AG04449 (cell line): ENCODE measurements at regions of chr22 and their contacts with region 1.

Region 1: GRCh38 chr22:22687638-22688500 is 43.5 kb downstream of the GGTLC2 start:
- DNase-seq: peak; percentile 17
- H3K4me3 ChIP-seq: no peak overlapping the region
- CTCF ChIP-seq: peak; percentile 75

Region 2: GRCh38 chr22:22463855-22464540 is 223.9 kb before region 1 on chr22:
- CTCF ChIA-PET with region 1: interaction called, 12 read pairs
- POLR2A ChIA-PET with region 1: no interaction called
- DNase-seq: no peak
- H3K4me3 ChIP-seq: no peak overlapping the region
- CTCF ChIP-seq: peak; percentile 49

Region 3: DNA sequence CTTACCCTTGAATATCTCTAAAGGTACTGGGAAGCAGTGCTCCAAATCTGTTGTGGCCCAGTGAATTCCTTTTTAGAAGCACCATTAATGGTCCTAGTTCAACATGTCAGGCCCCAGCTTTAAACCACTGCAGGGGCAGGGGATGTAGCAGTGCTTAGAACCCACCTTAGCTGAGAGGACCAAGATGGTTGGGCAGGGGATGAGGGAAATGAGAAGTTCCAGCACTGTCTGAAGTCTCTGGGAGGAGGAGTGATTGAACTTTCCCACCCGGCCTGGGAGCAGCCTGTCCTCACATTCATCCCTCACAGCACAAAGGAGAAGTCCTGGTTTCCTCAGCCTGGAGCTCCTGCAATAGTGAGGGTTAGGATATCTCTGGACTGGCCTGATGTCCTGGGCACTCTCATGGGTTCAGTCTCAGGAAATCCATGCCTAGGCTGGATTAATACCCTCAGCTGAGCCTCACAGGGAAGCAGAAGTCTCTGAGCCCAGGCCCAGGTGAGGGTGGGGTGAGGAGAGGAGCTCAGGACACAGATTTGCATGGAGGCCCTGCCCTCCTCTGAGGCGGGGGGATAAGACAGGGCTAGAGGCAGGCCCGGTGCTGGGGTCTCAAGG is 100.2 kb before region 1 on chr22:
- CTCF ChIA-PET with region 1: interaction called, 15 read pairs
- POLR2A ChIA-PET with region 1: no interaction called
- DNase-seq: no peak
- H3K4me3 ChIP-seq: no peak overlapping the region
- CTCF ChIP-seq: no peak

Region 4: DNA sequence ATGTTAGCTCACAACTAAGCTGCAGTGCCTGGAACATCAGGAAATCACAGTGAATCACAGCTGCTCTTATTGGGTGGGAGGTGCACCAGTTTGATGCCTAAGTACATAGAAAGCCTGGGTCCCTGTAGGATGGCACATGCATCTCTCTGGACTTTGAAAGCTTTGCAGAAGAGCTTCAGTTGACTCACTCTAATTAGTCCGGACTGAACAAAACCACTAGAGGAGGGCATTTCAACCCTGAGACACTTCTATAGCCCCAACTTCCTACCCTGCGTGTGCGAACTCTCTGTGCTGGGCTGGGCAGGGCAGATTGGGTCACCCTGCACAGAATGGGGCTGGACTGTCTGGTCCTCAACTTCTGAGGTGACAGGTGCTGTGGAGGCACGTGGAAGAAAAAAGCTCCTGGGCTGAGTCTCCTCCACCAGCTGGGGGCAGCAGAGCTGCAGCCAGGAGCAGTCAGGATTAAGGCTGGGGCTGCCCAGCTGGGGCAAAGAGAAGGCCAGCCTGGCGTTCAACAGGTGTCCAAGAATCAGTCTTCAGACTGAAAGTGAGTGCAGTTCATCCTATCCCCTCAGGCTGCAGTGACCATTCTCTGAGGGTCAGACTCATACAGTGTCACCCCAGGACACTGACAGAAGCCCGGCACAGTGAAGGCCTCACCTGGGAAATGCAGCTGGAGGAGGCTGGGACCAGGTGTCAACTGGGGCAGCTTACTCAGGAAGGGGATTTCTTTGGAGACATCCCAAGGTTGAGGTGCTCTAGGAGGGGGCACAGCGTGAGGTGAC is 21.4 kb before region 1 on chr22:
- CTCF ChIA-PET with region 1: interaction called, 14 read pairs
- POLR2A ChIA-PET with region 1: no interaction called
- DNase-seq: no peak
- H3K4me3 ChIP-seq: no peak overlapping the region
- CTCF ChIP-seq: peak; percentile 59

Region 5: GRCh38 chr22:22702237-22703202 is 14.7 kb after region 1 on chr22:
- CTCF ChIA-PET with region 1: interaction called, 17 read pairs
- POLR2A ChIA-PET with region 1: no interaction called
- DNase-seq: no peak
- H3K4me3 ChIP-seq: no peak overlapping the region
- CTCF ChIP-seq: no peak